HEK293 (cell line): ENCODE measurements at regions of chr15 and their contacts with region 1.

Region 1: DNA sequence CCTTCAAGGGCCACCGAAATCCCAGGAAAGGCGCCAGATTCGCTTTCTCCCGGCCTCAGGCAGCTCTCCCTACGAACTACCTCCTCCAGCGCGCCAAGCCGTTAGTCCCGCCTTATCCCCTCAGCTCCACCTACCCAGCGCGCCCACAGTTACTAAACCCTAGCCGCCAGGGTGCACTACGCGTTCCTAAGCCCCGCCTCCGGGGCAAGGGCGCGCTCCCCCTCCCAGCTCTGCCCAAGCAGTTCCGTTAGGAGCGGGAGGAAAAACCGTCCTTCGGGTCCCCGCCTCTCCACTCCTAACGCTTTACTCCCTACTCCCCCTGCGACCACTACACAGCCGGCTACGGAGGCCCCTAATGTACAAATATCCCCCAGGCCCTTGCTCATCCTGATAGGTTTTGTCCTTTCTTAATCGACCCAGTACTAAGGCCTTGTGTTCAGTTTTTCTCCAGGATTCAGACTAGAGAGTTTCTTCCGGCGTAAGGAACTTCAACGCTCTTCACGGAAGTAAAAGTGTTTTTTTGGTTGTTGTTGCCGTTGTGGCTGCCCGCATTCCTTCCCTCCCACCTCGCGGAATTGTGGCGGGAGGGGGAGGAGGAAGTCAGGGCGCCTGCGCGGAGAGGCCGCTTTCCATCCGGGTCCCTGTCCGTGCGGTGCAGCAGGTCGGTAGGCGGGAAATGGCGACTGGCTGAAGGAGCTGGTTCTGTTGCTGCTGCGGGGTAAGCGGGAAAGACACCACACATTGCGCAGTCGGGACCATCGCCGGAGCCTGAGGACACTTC is at the start of gene CTDSPL2:
- H3K4me3 ChIP-seq: peak within 1 kb of the TSS; percentile 64
- H3K27ac ChIP-seq: peak within 1 kb of the TSS; percentile 89
- H3K4me1 ChIP-seq: no peaks in the 10 kb centered on the region
- CTCF ChIP-seq: peak; percentile 93

Region 2: DNA sequence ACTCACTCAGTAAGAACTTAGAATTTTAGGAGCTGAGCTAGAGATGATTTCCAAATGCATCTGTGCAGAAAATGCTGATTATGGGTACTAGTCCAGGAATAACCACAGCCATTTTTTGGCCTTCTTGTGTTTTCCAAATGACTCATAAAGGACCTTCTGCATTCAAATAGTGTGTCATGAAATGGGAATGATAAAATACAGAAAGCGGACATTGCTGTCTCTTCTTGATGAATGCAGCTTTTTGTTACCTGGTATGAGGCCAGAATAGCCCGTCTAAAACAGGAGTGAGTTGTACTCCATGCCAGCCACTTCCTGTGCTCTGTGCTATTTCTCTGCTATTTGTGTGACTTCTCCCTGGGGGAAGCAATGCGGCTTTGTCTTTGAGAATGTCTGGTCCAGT is 211.6 kb before region 1 on chr15:
- CTCF ChIA-PET with region 1: no interaction called
- POLR2A ChIA-PET with region 1: no interaction called
- H3K4me3 ChIP-seq: no peak overlapping the region
- H3K27ac ChIP-seq: no peak overlapping the region
- H3K4me1 ChIP-seq: no peaks in the 10 kb centered on the region
- CTCF ChIP-seq: no peak

Region 3: DNA sequence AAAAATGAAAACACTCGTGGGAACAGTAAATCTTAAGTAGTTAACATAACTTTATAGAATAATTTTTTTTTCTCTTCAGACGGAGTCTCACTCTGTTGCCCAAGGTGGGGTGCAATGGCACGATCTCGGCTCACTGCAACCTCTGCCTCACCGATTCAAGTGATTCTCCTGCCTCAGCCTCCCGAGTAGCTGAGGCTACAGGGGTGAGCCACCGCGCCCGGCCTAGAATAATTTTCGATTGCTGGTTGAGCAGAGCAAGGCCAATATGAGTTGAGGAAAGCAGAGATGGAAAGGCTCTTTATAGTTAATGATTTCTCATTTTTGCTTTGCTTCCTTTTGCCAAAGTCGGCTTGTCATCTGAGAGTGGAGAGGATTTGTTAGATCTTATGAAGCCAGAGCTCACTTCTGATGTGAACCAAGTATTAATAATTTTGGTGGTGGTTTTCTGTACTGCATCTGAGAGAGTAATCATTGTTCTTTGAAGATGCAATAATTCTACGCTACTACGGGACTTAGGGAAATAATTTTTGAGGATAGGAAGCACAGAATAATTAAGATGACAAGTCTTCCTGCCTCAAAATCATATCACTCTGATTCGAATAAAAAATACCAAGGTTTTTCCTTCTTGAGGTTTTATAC is 140.2 kb before region 1 on chr15:
- CTCF ChIA-PET with region 1: no interaction called
- POLR2A ChIA-PET with region 1: interaction called, 34 read pairs
- H3K4me3 ChIP-seq: peak overlapping the region; percentile 65; the same call in 1 of the 2 replicates
- H3K27ac ChIP-seq: no peak overlapping the region
- H3K4me1 ChIP-seq: no peaks in the 10 kb centered on the region
- CTCF ChIP-seq: no peak

Region 4: DNA sequence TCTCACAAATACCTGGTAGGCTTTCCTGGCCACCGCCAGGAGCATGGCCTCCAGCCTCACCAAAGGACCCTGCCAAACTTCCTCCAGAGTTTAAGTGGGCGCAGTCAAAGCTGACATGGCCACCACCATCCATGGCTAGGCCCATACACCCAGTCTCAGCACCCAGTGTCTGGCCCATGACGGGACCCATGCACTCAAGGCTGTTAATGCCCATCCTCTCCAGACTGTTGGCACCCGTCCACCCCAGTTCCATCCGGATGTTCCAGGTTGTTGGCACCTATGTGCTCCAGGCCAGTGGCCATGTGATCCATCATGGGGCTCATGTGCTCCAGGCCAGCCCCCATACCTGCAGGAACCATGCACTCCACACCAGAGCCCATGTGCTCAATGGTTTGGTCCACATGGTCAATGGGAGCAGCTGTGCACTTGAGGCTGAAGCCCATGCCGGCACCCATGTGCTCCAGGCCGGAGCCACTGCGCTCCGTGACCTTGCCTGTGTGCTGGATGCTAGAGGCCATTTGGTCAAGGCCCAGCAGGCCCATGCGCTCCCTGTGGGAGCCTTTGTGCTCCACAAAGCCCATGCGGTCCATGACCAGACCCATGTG is 20.7 kb after region 1 on chr15:
- CTCF ChIA-PET with region 1: no interaction called
- POLR2A ChIA-PET with region 1: no interaction called
- H3K4me3 ChIP-seq: no peak overlapping the region
- H3K27ac ChIP-seq: no peak overlapping the region
- H3K4me1 ChIP-seq: no peaks in the 10 kb centered on the region
- CTCF ChIP-seq: no peak

Region 5: DNA sequence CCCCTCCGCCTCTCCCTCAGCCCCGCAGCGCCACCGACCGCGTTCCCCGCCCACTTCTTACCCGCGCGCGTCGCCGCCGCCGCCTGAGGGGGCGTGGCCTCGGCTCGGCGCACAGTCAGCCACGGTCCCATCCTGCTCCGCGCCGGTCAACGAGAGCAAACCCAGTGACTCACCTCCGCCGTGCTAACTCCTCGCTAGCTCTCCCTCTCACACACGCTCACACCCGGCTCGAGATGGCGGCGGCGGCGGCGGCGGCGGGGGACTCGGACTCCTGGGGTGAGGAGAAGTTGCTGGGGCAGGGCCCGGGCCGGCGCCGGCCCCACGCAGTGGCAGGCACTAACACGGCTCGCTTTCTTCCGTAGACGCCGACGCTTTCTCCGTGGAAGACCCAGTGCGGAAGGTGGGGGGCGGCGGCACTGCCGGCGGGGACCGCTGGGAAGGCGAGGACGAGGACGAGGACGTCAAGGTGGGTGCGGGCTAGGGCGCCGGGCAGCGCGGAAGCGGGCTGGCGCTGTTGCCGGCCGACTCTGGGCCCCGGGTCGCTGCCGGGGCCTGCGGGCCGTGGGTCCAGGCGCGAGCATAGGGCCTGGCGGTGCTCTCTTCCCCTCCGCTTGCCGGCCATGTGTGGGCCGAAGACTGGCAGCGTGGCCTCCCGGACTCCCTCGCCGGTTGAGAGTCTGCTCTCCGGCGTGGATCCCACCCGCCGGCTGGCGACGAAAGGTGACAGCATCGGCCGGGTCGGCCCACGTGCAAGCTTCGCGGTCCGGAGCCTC is 110.0 kb after region 1 on chr15 and contains the start of gene EIF3J:
- CTCF ChIA-PET with region 1: no interaction called
- POLR2A ChIA-PET with region 1: interaction called, 18 read pairs
- H3K4me3 ChIP-seq: peak within 1 kb of the TSS; percentile 88
- H3K27ac ChIP-seq: peak within 1 kb of the TSS; percentile 94
- H3K4me1 ChIP-seq: no peaks in the 10 kb centered on the region
- CTCF ChIP-seq: no peak